ENCODE measurements at regions of chr6 and their contacts with region 1.

Region 1: DNA sequence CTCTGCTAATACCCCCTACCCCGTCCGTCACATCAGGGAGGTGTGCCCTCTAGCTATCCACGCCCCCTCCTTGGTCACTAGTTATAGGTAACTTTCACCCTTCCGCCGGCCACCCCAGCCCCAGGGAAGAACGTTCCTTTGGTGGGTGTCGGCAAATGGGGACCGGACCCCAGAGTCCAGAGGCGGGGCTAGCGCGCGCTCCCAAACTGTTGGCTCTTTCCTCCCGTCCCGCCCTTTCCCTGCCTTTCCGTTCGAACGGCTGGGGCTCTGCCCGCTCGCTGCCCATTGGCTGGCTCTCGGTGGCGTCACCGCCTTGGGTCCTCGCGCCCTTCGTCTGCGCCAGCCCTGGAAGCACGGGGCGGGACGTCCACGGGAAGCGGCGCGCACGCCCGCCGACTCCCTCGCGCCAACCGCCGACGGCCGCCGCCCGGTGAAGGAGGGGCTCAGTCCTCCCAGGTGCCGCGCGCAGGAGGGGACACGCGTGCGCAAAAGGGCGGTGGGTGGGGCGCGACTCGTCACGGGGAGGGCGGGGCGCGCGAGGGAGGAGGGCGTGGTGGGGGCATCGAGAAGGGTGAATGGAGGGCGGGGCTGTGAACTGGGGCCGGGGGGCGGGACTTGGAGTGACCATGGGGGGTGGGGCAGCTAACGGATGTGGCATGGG is 634 bp upstream of the PHF1 start:
- DNase-seq: peak; percentile 97 to 98 (median 97)
- H3K4me3 ChIP-seq: peak overlapping the region; percentile 67 to 92
- H3K4me3 Mint-ChIP-seq: peak overlapping the region; percentile 85 to 95 (median 92)
- H3K27ac ChIP-seq: peak overlapping the region; percentile 99
- H3K27ac Mint-ChIP-seq: peak overlapping the region; percentile 94 to 100 (median 99)
- H3K4me1 ChIP-seq: peaks cover 57% of the 10 kb centered on the region
- H3K4me1 Mint-ChIP-seq: peaks cover 31 to 68% (median 48%) of the 10 kb centered on the region in 4 donors
- H3K27me3 ChIP-seq: no peaks in the 10 kb centered on the region
- H3K27me3 Mint-ChIP-seq: no peaks in the 10 kb centered on the region

Region 2: GRCh38 chr6:33323623-33323948 is 86.6 kb before region 1 on chr6:
- CTCF ChIA-PET with region 1: no interaction called
- POLR2A ChIA-PET with region 1: interaction called, 5 read pairs
- intact Hi-C with region 1: loop called (anchors 1 kb)
- DNase-seq: no peak
- H3K4me3 ChIP-seq: peak overlapping the region; percentile 53 to 68
- H3K4me3 Mint-ChIP-seq: peak overlapping the region; percentile 94 to 100 (median 98)
- H3K27ac ChIP-seq: peak overlapping the region; percentile 88
- H3K27ac Mint-ChIP-seq: peak overlapping the region; percentile 89 to 100 (median 96)
- H3K4me1 ChIP-seq: peaks cover 47% of the 10 kb centered on the region
- H3K4me1 Mint-ChIP-seq: peaks cover 32 to 59% (median 46%) of the 10 kb centered on the region in 4 donors
- H3K27me3 ChIP-seq: no peaks in the 10 kb centered on the region
- H3K27me3 Mint-ChIP-seq: no peaks in the 10 kb centered on the region

Region 3: DNA sequence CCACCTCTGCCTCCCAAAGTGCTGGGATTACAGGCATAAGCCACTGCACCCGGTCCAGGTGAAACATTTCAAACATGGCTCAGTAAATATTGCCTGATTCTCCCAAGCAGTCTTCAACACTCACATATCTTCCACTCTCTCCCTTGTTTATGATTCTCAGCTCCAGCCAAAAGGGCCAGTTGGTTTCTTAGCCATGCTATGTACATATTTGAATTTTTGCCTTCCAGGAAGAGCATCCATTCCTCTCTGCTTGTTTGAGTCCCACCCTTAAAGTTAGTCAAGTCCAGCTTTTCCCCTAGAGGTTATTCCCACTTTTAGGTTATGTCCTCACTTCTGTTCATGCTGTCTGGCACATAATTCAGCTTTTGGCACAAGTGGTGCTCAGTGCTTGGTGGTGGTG is 12.6 kb before region 1 on chr6:
- CTCF ChIA-PET with region 1: no interaction called
- POLR2A ChIA-PET with region 1: no interaction called
- intact Hi-C with region 1: no loop called
- DNase-seq: no peak
- H3K4me3 ChIP-seq: no peak overlapping the region
- H3K4me3 Mint-ChIP-seq: no peak overlapping the region
- H3K27ac ChIP-seq: no peak overlapping the region
- H3K27ac Mint-ChIP-seq: peak overlapping the region in 2 of 7 donors; percentile 87 to 88
- H3K4me1 ChIP-seq: peaks cover 7% of the 10 kb centered on the region
- H3K4me1 Mint-ChIP-seq: peaks cover 11 to 27% (median 14%) of the 10 kb centered on the region in 4 donors
- H3K27me3 ChIP-seq: no peaks in the 10 kb centered on the region
- H3K27me3 Mint-ChIP-seq: no peaks in the 10 kb centered on the region

Region 4: DNA sequence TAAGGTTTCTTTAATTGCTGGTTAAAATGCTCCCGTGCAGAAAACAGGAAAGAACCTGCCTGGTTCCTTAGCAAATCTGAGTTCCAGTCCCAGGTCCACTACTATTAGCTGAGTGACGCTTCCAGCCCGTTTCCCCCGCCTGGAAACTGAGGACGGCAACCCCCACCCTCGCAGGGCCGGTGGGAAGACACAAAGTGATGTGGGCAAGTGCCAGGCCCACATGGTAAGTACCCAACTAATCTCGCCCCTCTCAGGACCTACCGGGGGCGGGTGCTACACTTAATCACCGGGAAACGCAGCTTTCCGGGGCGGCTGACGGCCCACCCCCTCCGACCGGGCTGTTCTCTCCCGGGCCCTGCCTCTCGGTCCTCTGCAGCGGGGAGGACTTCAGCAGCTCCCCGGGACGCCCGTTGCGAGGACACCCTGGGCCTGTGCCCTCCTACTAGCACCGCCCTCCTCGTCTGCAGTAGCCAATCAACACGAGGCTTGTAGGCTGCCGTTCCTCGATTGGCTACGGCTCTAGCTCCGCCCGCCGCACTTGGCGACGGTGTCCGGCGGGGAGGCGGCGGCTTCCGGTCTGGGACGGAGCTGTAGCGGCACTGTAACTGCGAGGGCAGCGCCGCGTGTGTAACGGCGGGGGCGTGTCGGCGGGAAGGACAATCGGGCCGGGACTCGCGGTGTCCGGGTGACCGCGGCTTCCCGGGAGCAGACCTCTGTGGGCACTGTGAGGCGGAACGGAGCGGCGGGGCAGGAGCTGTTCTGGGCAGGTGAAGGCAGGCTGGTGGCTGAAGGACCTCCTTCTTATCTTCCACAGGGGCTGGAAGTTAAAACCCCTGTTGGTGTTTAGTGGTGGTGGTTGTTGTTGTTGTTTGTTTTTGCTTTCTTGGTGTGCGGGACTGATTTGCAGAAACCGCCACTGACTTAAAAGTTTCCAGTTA is 44.1 kb after region 1 on chr6 and contains the start of gene ZBTB9:
- CTCF ChIA-PET with region 1: no interaction called
- POLR2A ChIA-PET with region 1: interaction called, 6 read pairs
- intact Hi-C with region 1: loop called (anchors 1 kb)
- DNase-seq: peak; percentile 92 to 96 (median 92)
- H3K4me3 ChIP-seq: peak within 1 kb of the TSS; percentile 84 to 89
- H3K4me3 Mint-ChIP-seq: peak within 1 kb of the TSS; percentile 93 to 99 (median 97)
- H3K27ac ChIP-seq: peak within 1 kb of the TSS; percentile 78
- H3K27ac Mint-ChIP-seq: peak within 1 kb of the TSS; percentile 82 to 98 (median 95)
- H3K4me1 ChIP-seq: peaks cover 29% of the 10 kb centered on the region
- H3K4me1 Mint-ChIP-seq: peaks cover 14 to 43% (median 29%) of the 10 kb centered on the region in 4 donors
- H3K27me3 ChIP-seq: no peaks in the 10 kb centered on the region
- H3K27me3 Mint-ChIP-seq: no peaks in the 10 kb centered on the region
- total RNA-seq, gene ZBTB9: 12.1 to 12.8 TPM

Measured in CD4-positive, alpha-beta memory T cell (primary cell).